ENCODE measurements at regions of chr1 and their contacts with region 1.

Region 1: GRCh38 chr1:176938375-176938774 is 226.1 kb downstream of the ASTN1 start:
- DNase-seq: no peak
- ATAC-seq: no peak
- H3K4me3 ChIP-seq: no peak overlapping the region
- H3K4me3 Mint-ChIP-seq: no peak overlapping the region
- H3K27ac ChIP-seq: no peak overlapping the region
- H3K27ac Mint-ChIP-seq: no peak overlapping the region
- H3K4me1 ChIP-seq: no peaks in the 10 kb centered on the region
- H3K4me1 Mint-ChIP-seq: no peaks in the 10 kb centered on the region
- H3K27me3 ChIP-seq: no peaks in the 10 kb centered on the region
- H3K27me3 Mint-ChIP-seq: no peaks in the 10 kb centered on the region

Region 2: DNA sequence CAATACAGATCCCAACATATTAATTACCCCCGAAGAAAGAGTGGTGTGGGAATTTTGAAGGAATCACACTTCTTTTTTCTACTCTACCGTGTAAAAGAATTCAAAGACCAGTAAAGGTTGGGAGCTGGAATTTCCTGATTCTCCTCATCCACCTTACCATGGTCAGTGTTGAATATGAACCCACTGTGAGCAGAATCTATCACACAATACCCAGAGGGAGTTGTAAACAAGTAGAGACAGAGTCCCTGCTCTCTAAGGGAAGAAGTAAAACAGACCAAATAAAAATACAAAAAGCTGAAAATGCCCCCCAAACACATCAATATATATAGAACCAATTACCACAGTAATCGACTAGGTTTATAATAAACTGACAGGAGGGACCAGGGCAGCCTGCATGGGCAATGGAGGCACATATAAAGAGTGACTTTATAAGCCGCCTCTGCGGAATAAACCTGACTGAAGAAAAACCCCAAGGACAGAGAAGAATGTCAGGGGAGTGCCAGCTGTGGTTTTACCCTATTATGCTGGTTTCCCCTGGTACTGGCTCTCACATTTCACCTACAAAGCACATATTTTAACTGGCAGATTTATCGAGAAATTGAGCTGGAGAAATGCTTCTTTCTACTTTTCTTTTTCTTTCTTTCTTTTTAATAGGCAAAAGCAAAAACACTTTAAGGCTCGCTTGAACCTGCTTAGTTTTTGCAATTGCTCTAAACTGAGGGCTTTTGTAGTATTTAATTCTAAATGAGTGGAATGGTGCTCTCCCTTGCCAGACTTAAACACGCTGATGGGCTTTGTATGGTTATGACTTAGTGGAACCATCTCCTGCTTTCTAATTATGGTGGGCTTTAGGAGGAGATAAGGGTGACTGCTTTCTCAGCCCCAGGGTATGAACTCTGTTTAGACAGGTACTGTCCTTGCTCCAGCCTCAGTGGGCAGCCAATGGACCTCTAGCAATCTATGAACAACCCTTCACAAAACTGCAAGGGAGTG is 18.7 kb before region 1 on chr1:
- CTCF ChIA-PET with region 1: no interaction called
- POLR2A ChIA-PET with region 1: interaction called in 1 of 2 experiments, 10 read pairs
- DNase-seq: no peak
- ATAC-seq: no peak
- H3K4me3 ChIP-seq: no peak overlapping the region
- H3K4me3 Mint-ChIP-seq: no peak overlapping the region
- H3K27ac ChIP-seq: no peak overlapping the region
- H3K27ac Mint-ChIP-seq: no peak overlapping the region
- H3K4me1 ChIP-seq: no peaks in the 10 kb centered on the region
- H3K4me1 Mint-ChIP-seq: no peaks in the 10 kb centered on the region
- H3K27me3 ChIP-seq: no peaks in the 10 kb centered on the region
- H3K27me3 Mint-ChIP-seq: peaks cover 3 to 7% of the 10 kb centered on the region in 2 donors